PC-3 (cell line): ENCODE measurements at regions of chr2 and their contacts with region 1.

Region 1: GRCh38 chr2:231494669-231495068 is 30.4 kb upstream of the NCL start:
- DNase-seq: no peak
- ATAC-seq: no peak
- H3K4me3 ChIP-seq: no peak overlapping the region
- H3K27ac ChIP-seq: no peak overlapping the region
- H3K4me1 ChIP-seq: no peaks in the 10 kb centered on the region
- H3K27me3 ChIP-seq: no peaks in the 10 kb centered on the region
- CTCF ChIP-seq: no peak

Region 2: DNA sequence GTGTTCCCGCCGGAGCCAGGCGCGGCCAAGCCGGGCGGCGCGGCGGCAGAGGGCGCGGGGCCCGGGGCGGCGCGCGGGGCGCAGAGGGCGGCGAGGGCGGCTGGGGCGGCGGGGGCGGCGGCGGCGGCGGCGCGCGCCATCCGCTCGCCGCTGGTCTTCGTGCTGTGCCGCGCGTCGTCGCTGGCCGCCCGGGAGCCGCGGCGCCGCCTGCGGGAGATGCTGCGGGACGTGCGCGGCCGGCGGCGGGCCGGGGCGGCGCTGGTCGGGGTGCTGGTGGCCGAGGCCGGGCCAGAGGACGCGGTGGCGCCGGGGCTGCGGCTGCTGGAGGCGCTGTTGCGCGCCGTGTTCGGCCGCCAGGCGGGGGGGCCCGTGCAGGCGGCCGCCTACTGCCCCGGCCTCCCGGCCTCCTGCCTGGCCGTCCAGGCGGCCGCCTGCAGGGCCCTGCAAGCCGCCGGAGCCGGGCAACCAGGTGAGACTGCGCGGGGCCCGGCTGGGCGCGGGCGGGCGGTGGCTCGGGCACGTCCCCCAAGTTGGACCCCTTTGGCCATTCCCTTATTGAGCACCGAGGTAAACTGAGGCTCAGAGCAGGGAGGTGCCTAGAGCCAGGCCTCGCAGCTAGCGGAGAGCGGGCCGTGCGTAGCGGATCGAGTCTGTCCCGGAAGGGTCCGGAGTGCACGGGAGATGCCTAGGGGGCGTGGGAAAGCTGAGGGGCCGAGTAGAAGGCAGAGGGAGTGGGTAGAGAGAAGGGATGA is 456.8 kb before region 1 on chr2:
- CTCF ChIA-PET with region 1: no interaction called
- POLR2A ChIA-PET with region 1: no interaction called
- intact Hi-C with region 1: no loop called
- DNase-seq: no peak
- ATAC-seq: peak; percentile 54
- H3K4me3 ChIP-seq: peak overlapping the region; percentile 52
- H3K27ac ChIP-seq: no peak overlapping the region
- H3K4me1 ChIP-seq: no peaks in the 10 kb centered on the region
- H3K27me3 ChIP-seq: peaks cover 21% of the 10 kb centered on the region
- CTCF ChIP-seq: no peak

Region 3: DNA sequence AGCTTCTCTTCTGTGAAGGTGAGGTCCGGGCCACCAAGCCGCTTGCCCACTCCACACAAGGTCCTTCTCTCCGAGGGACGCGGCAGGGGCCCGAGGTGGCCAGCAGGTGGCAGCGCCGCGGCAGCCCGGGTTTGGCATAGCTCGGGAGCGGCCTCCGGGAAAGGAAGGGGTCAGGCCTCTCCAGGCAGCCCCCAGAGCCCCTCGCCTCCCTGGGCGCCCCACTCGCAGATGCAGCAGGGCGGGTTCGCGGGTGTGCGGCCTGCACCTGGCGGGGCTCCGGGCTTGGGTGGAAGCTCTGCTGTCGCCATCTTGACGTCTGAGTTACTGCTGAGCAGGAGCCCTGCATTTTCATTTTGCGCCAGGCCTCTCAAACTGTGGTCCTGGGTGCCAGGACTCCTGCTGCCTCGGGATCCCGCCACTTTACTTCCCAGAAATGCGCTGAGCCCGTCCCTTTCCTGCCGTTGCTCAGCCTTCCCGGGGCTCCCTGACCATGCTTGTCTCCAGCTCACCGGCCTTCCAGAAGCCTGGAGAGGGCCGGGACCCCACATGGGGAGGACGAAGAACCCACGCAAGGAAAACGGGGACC is 11.8 kb before region 1 on chr2:
- CTCF ChIA-PET with region 1: no interaction called
- POLR2A ChIA-PET with region 1: interaction called, 15 read pairs
- intact Hi-C with region 1: no loop called
- DNase-seq: peak; percentile 69
- ATAC-seq: peak; percentile 98
- H3K4me3 ChIP-seq: peak overlapping the region; percentile 40; the same call in 1 of the 2 replicates
- H3K27ac ChIP-seq: no peak overlapping the region
- H3K4me1 ChIP-seq: 0 out of 2 replicates have a peak, but pooled peaks cover 4% of the 10 kb centered on the region
- H3K27me3 ChIP-seq: no peaks in the 10 kb centered on the region
- CTCF ChIP-seq: peak; percentile 86